CD4-positive, alpha-beta T cell (primary cell): ENCODE measurements at regions of chr1 and their contacts with region 1.

Region 1: GRCh38 chr1:85259118-85259911 is at the start of gene C1orf52:
- DNase-seq: peak; percentile 92 to 99 (median 96)
- ATAC-seq: peak; percentile 93
- H3K4me3 ChIP-seq: peak within 1 kb of the TSS; percentile 88
- H3K4me3 Mint-ChIP-seq: peak within 1 kb of the TSS; percentile 99
- H3K27ac ChIP-seq: peak within 1 kb of the TSS; percentile 47 to 81
- H3K27ac Mint-ChIP-seq: peak within 1 kb of the TSS; percentile 95
- H3K4me1 ChIP-seq: peaks cover 21% of the 10 kb centered on the region
- H3K4me1 Mint-ChIP-seq: peaks cover 41% of the 10 kb centered on the region
- H3K27me3 ChIP-seq: no peaks in the 10 kb centered on the region
- H3K27me3 Mint-ChIP-seq: no peaks in the 10 kb centered on the region
- CTCF ChIP-seq: peak; percentile 97
- total RNA-seq, gene C1orf52: 62.4 to 66.6 TPM

Region 2: GRCh38 chr1:85061711-85062424 is 197.4 kb before region 1 on chr1:
- CTCF ChIA-PET with region 1: interaction called, 4 read pairs
- POLR2A ChIA-PET with region 1: no interaction called
- intact Hi-C with region 1: loop called in 1 of 2 experiments (anchors 5 kb)
- DNase-seq: peak; percentile 69 to 95 (median 73)
- ATAC-seq: peak; percentile 99
- H3K4me3 ChIP-seq: peak overlapping the region; percentile 50
- H3K4me3 Mint-ChIP-seq: peak overlapping the region; percentile 89
- H3K27ac ChIP-seq: no peak overlapping the region
- H3K27ac Mint-ChIP-seq: peak overlapping the region; percentile 43
- H3K4me1 ChIP-seq: peaks cover 10% of the 10 kb centered on the region
- H3K4me1 Mint-ChIP-seq: peaks cover 10% of the 10 kb centered on the region
- H3K27me3 ChIP-seq: peaks cover 0 to 3% of the 10 kb centered on the region in 2 experiments
- H3K27me3 Mint-ChIP-seq: peaks cover 28% of the 10 kb centered on the region
- CTCF ChIP-seq: no peak

Region 3: GRCh38 chr1:85109475-85109874 is 149.8 kb before region 1 on chr1:
- CTCF ChIA-PET with region 1: interaction called, 23 read pairs
- POLR2A ChIA-PET with region 1: interaction called, 11 read pairs
- intact Hi-C with region 1: loop called (anchors 1 to 2 kb)
- DNase-seq: peak in 13 of 14 experiments; percentile 14 to 73 (median 39)
- ATAC-seq: peak; percentile 83
- H3K4me3 ChIP-seq: no peak overlapping the region
- H3K4me3 Mint-ChIP-seq: no peak overlapping the region
- H3K27ac ChIP-seq: no peak overlapping the region
- H3K27ac Mint-ChIP-seq: no peak overlapping the region
- H3K4me1 ChIP-seq: no peaks in the 10 kb centered on the region
- H3K4me1 Mint-ChIP-seq: no peaks in the 10 kb centered on the region
- H3K27me3 ChIP-seq: no peaks in the 10 kb centered on the region
- H3K27me3 Mint-ChIP-seq: peaks cover 6% of the 10 kb centered on the region
- CTCF ChIP-seq: peak; percentile 54

Region 4: GRCh38 chr1:85276215-85276977 is 17.1 kb after region 1 on chr1 and contains the start of gene BCL10:
- CTCF ChIA-PET with region 1: interaction called, 119 read pairs
- POLR2A ChIA-PET with region 1: interaction called, 104 read pairs
- intact Hi-C with region 1: loop called (anchors 1 to 2 kb)
- DNase-seq: peak; percentile 93 to 99 (median 96)
- ATAC-seq: peak; percentile 95
- H3K4me3 ChIP-seq: peak within 1 kb of the TSS; percentile 94
- H3K4me3 Mint-ChIP-seq: peak within 1 kb of the TSS; percentile 92
- H3K27ac ChIP-seq: peak within 1 kb of the TSS; percentile 90 to 99
- H3K27ac Mint-ChIP-seq: peak within 1 kb of the TSS; percentile 95
- H3K4me1 ChIP-seq: peaks cover 28% of the 10 kb centered on the region
- H3K4me1 Mint-ChIP-seq: peaks cover 57% of the 10 kb centered on the region
- H3K27me3 ChIP-seq: no peaks in the 10 kb centered on the region
- H3K27me3 Mint-ChIP-seq: no peaks in the 10 kb centered on the region
- CTCF ChIP-seq: no peak
- total RNA-seq, gene BCL10: 50.0 to 52.0 TPM